Lower lobe of right lung (tissue), 2 donors: ENCODE measurements at regions of chr5 and their contacts with region 1.

Region 1: GRCh38 chr5:115309751-115310370 is 13.4 kb upstream of the CCDC112 start:
- DNase-seq: no peak
- ATAC-seq: peak in 1 of 2 donors; percentile 60
- H3K4me3 ChIP-seq: no peak overlapping the region
- H3K27ac ChIP-seq: no peak overlapping the region
- H3K4me1 ChIP-seq: no peaks in the 10 kb centered on the region
- H3K27me3 ChIP-seq: no peaks in the 10 kb centered on the region
- CTCF ChIP-seq: peak; percentile 72

Region 2: GRCh38 chr5:115571441-115571878 is 261.6 kb after region 1 on chr5:
- intact Hi-C with region 1: loop called (anchors 5 kb)
- DNase-seq: no peak
- ATAC-seq: no peak
- H3K4me3 ChIP-seq: no peak overlapping the region
- H3K27ac ChIP-seq: no peak overlapping the region
- H3K4me1 ChIP-seq: no peaks in the 10 kb centered on the region
- H3K27me3 ChIP-seq: no peaks in the 10 kb centered on the region
- CTCF ChIP-seq: no peak

Region 3: DNA sequence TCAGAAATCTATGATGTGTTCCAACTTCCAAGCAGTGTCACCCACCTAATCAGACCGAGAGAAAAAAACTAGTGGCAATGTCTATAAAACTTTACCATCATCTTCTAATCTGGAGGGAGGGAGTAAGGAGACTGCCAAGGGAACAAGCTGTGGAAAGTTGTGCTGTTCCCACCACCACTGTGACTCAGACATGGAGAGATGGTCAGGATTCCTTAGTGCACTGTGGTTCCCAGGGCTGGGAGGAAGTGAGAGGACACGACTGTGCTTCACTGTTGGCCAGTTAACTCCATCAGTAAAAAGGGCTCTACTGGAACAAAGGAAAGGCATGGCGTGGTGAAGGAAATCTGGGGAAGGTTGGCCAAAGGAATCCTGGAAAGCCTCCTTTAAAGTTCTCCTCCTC is 273.6 kb after region 1 on chr5:
- intact Hi-C with region 1: no loop called
- DNase-seq: no peak
- ATAC-seq: no peak
- H3K4me3 ChIP-seq: no peak overlapping the region
- H3K27ac ChIP-seq: no peak overlapping the region
- H3K4me1 ChIP-seq: no peaks in the 10 kb centered on the region
- H3K27me3 ChIP-seq: no peaks in the 10 kb centered on the region
- CTCF ChIP-seq: no peak